CD8-positive, alpha-beta T cell (primary cell): ENCODE measurements at regions of chr6 and their contacts with region 1.

Region 1: DNA sequence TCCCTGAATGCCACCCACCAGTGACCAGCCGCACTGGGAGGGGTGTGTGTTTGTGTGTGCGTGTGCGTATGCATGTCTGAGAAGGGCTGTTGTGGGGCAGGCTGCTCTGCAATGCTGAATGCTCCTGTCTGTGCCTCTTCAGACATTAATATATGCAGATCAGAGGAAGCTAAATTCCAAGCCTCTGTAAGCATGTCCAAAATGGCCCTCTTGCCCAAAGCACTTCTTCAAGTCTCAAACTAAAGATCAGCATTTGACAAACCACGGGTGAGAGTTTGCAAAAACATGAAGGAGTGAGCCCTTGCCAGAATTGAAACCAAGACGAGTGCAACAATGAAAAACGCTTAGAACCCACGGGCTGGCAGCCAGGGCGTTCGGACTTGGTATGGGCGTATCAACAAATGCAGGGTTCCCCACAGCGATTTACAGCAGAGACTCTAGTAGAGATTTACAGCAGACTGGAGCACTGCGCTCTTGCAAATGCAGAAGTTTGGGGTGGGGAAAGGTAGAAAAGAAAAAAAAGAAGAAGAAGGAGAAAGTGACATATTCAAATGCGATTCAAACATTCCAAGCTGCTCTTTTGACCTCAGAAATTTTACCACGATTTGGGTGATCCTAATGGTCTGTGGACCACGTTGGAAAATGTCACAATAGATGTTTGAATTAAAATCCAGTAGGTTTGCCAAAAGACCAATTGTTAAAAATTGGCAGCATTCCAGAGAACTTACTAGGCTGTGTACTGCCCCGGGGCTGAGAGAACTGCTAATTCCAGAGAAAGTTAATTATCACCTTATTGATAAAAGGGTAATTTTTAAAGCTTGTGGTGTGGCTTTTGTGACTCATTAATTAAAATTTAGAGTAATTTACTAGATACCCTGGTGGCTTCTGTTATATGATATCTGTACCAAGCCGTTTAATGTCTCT is 3.5 kb downstream of the SCML4 start:
- DNase-seq: peak; percentile 15 to 78 (median 54)
- ATAC-seq: no peak
- H3K4me3 ChIP-seq: peak overlapping the region; percentile 72 to 92
- H3K4me3 Mint-ChIP-seq: peak overlapping the region; percentile 92
- H3K27ac ChIP-seq: peak overlapping the region; percentile 81 to 90
- H3K27ac Mint-ChIP-seq: peak overlapping the region; percentile 96
- H3K4me1 ChIP-seq: peaks cover 65% of the 10 kb centered on the region
- H3K4me1 Mint-ChIP-seq: peaks cover 82% of the 10 kb centered on the region
- H3K27me3 ChIP-seq: no peaks in the 10 kb centered on the region
- H3K27me3 Mint-ChIP-seq: no peaks in the 10 kb centered on the region
- CTCF ChIP-seq: no peak

Region 2: GRCh38 chr6:106519460-106520394 is 1300.9 kb before region 1 on chr6:
- CTCF ChIA-PET with region 1: no interaction called
- POLR2A ChIA-PET with region 1: interaction called, 3 read pairs
- intact Hi-C with region 1: loop called (anchors 5 to 10 kb)
- DNase-seq: peak; percentile 41 to 93 (median 77)
- ATAC-seq: peak; percentile 50
- H3K4me3 ChIP-seq: peak overlapping the region; percentile 48 to 51
- H3K4me3 Mint-ChIP-seq: peak overlapping the region; percentile 91
- H3K27ac ChIP-seq: peak overlapping the region; percentile 79 to 82
- H3K27ac Mint-ChIP-seq: peak overlapping the region; percentile 96
- H3K4me1 ChIP-seq: peaks cover 48% of the 10 kb centered on the region
- H3K4me1 Mint-ChIP-seq: peaks cover 76% of the 10 kb centered on the region
- H3K27me3 ChIP-seq: no peaks in the 10 kb centered on the region
- H3K27me3 Mint-ChIP-seq: no peaks in the 10 kb centered on the region
- CTCF ChIP-seq: no peak

Region 3: GRCh38 chr6:107408723-107409122 is 411.9 kb before region 1 on chr6:
- CTCF ChIA-PET with region 1: no interaction called
- POLR2A ChIA-PET with region 1: no interaction called
- intact Hi-C with region 1: no loop called
- DNase-seq: no peak
- ATAC-seq: no peak
- H3K4me3 ChIP-seq: no peak overlapping the region
- H3K4me3 Mint-ChIP-seq: no peak overlapping the region
- H3K27ac ChIP-seq: no peak overlapping the region
- H3K27ac Mint-ChIP-seq: no peak overlapping the region
- H3K4me1 ChIP-seq: no peaks in the 10 kb centered on the region
- H3K4me1 Mint-ChIP-seq: no peaks in the 10 kb centered on the region
- H3K27me3 ChIP-seq: no peaks in the 10 kb centered on the region
- H3K27me3 Mint-ChIP-seq: no peaks in the 10 kb centered on the region
- CTCF ChIP-seq: no peak

Region 4: GRCh38 chr6:107731422-107732319 is 88.9 kb before region 1 on chr6:
- CTCF ChIA-PET with region 1: interaction called, 54 read pairs
- POLR2A ChIA-PET with region 1: interaction called, 83 read pairs
- intact Hi-C with region 1: loop called (anchors 1 to 2 kb)
- DNase-seq: peak in 6 of 9 experiments; percentile 37 to 74 (median 45)
- ATAC-seq: peak; percentile 31
- H3K4me3 ChIP-seq: peak overlapping the region; percentile 73 to 85
- H3K4me3 Mint-ChIP-seq: peak overlapping the region; percentile 88
- H3K27ac ChIP-seq: peak overlapping the region; percentile 43 to 83
- H3K27ac Mint-ChIP-seq: peak overlapping the region; percentile 94
- H3K4me1 ChIP-seq: peaks cover 82% of the 10 kb centered on the region
- H3K4me1 Mint-ChIP-seq: peaks cover 95% of the 10 kb centered on the region
- H3K27me3 ChIP-seq: no peaks in the 10 kb centered on the region
- H3K27me3 Mint-ChIP-seq: no peaks in the 10 kb centered on the region
- CTCF ChIP-seq: no peak

Region 5: GRCh38 chr6:107786709-107787588 is 33.7 kb before region 1 on chr6:
- CTCF ChIA-PET with region 1: interaction called, 11 read pairs
- POLR2A ChIA-PET with region 1: interaction called, 83 read pairs
- intact Hi-C with region 1: loop called in 1 of 2 experiments (anchors 1 kb)
- DNase-seq: peak in 8 of 9 experiments; percentile 32 to 75 (median 56)
- ATAC-seq: peak; percentile 75
- H3K4me3 ChIP-seq: peak overlapping the region; percentile 7 to 19
- H3K4me3 Mint-ChIP-seq: peak overlapping the region; percentile 72
- H3K27ac ChIP-seq: peak overlapping the region; percentile 29 to 78
- H3K27ac Mint-ChIP-seq: peak overlapping the region; percentile 85
- H3K4me1 ChIP-seq: peaks cover 78% of the 10 kb centered on the region
- H3K4me1 Mint-ChIP-seq: peaks cover 87% of the 10 kb centered on the region
- H3K27me3 ChIP-seq: no peaks in the 10 kb centered on the region
- H3K27me3 Mint-ChIP-seq: no peaks in the 10 kb centered on the region
- CTCF ChIP-seq: no peak

Region 6: GRCh38 chr6:107800564-107801164 is 19.9 kb before region 1 on chr6:
- CTCF ChIA-PET with region 1: no interaction called
- POLR2A ChIA-PET with region 1: interaction called, 6 read pairs
- intact Hi-C with region 1: loop called (anchors 1 to 2 kb)
- DNase-seq: peak in 2 of 9 experiments; percentile 43 to 60
- ATAC-seq: peak; percentile 47
- H3K4me3 ChIP-seq: no peak overlapping the region
- H3K4me3 Mint-ChIP-seq: no peak overlapping the region
- H3K27ac ChIP-seq: no peak overlapping the region
- H3K27ac Mint-ChIP-seq: peak overlapping the region; percentile 47
- H3K4me1 ChIP-seq: peaks cover 40% of the 10 kb centered on the region
- H3K4me1 Mint-ChIP-seq: peaks cover 65% of the 10 kb centered on the region
- H3K27me3 ChIP-seq: no peaks in the 10 kb centered on the region
- H3K27me3 Mint-ChIP-seq: no peaks in the 10 kb centered on the region
- CTCF ChIP-seq: peak; percentile 40

Region 7: DNA sequence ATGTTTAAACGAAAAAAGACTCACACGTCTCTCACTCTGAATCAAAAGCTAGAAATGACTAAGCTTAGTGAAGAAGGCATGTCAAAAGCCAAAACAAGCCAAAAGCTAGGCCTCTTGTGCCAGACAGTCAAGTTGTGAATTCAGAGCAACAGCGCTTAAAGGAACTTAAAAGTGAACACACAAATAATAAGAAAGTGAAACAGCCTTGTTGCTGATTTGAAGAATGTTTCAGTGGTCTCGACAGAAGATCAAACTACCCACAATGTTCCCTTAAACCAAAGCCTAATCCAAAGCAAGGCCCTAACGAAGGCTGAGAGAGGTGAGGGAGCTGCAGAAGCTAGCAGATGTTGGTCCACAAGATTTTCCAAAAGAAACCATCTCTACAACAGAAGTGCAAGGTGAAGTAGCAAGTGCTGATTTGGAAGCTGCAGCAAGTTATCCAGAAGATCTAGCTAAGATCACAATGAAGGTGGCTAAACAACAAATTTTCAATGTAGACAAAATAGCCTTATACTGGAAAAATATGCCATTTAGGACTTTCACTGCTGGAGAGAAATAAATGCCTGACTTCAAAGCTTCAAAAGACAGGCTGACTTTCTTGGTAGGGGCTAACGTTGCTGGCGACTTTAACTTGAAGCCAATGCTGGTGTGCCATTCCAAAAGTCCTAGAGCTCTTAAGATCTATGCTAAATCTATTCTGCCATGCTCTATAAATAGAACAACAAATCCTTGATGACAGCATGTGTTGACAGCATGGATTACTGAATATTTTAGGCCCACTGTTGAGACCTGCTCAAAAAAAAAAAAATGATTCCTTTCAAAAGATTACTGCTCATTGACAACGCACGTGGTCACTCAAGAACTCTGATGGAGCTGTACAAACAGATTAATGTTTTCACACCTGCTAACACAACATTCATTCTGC is 97.1 kb after region 1 on chr6:
- CTCF ChIA-PET with region 1: no interaction called
- POLR2A ChIA-PET with region 1: no interaction called
- intact Hi-C with region 1: no loop called
- DNase-seq: no peak
- ATAC-seq: no peak
- H3K4me3 ChIP-seq: no peak overlapping the region
- H3K4me3 Mint-ChIP-seq: no peak overlapping the region
- H3K27ac ChIP-seq: no peak overlapping the region
- H3K27ac Mint-ChIP-seq: no peak overlapping the region
- H3K4me1 ChIP-seq: no peaks in the 10 kb centered on the region
- H3K4me1 Mint-ChIP-seq: no peaks in the 10 kb centered on the region
- H3K27me3 ChIP-seq: no peaks in the 10 kb centered on the region
- H3K27me3 Mint-ChIP-seq: no peaks in the 10 kb centered on the region
- CTCF ChIP-seq: no peak